Activated T-helper 2 cell treated with anti-CD3 and anti-CD28 coated beads, Interferon-gamma antibody, Interleukin-2, Interleukin-4, amounts not matched to agents 10 μg/mL and 5 μg/mL and 100 μg/mL, durations not matched to agents 14 hours and 24 hours and 36 hours (primary cell): ENCODE measurements at regions of chr5 and their contacts with region 1.

Region 1: GRCh38 chr5:150758531-150759333 is at the start of gene DCTN4:
- DNase-seq: peak; percentile 90
- H3K4me3 Mint-ChIP-seq: no peak within 1 kb of the TSS
- H3K27ac Mint-ChIP-seq: no peak within 1 kb of the TSS
- H3K4me1 Mint-ChIP-seq: peaks cover 36% of the 10 kb centered on the region
- H3K27me3 Mint-ChIP-seq: no peaks in the 10 kb centered on the region
- total RNA-seq, gene DCTN4: 40.9 and 44.7 TPM in 2 replicates

Region 2: GRCh38 chr5:150700594-150701293 is 58.0 kb before region 1 on chr5 and contains the start of gene RBM22:
- intact Hi-C with region 1: loop called (anchors 1 kb)
- DNase-seq: peak; percentile 86
- H3K4me3 Mint-ChIP-seq: no peak within 1 kb of the TSS
- H3K27ac Mint-ChIP-seq: no peak within 1 kb of the TSS
- H3K4me1 Mint-ChIP-seq: peaks cover 6% of the 10 kb centered on the region
- H3K27me3 Mint-ChIP-seq: no peaks in the 10 kb centered on the region
- total RNA-seq, gene RBM22: 65.2 and 71.7 TPM in 2 replicates

Region 3: DNA sequence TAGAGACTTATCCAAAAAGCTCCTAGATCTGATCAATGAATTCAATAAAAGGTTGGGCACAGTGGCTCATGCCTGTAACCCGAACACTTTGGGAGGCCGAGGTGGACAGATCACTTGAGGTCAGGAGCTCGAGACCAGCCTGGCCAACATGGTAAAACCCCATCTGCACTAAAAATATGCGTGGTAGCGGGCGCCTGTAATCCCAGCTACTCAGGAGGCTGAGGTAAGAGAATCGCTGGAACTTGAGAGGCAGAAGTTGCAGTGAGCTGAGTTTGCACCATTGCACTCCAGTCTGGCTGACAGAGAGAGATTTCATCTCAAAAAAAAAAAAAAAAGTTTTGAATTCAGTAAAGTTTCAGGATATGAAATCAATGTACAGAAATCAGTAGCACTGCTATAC is 19.9 kb before region 1 on chr5:
- intact Hi-C with region 1: loop called (anchors 2 kb)
- DNase-seq: no peak
- H3K4me3 Mint-ChIP-seq: no peak overlapping the region
- H3K27ac Mint-ChIP-seq: peak overlapping the region; percentile 54
- H3K4me1 Mint-ChIP-seq: peaks cover 73% of the 10 kb centered on the region
- H3K27me3 Mint-ChIP-seq: no peaks in the 10 kb centered on the region

Region 4: DNA sequence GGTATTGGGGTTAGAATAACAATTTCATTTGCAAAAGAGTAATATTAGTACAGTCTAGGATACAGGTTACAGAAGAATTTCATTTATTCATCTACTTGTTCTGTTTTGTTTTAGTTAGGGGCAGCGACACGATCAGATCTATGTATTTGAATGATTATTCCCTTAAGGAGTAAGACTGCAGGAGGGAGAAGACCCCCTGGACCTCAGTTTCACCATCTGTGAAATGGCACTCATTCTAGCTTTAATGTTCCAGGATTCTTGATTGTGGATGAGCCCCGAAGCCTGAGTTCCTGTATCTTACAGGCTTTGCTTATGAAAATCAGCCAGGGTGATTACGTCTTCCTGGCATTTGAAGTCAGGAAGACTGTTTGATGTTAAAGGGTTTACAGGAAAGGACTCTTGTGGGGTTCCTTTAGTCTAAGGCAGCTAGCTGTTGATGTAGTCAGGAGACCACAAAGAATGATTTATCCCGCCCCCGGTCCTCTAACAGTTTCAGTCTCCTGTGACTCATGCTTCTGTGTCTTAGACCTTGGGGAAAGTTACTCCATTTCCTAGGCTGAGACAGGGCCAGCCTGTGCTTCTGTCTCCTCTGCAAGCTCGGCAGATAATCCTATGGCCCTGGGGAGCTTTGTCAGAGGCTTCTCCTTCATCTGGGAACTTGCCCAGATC is 31.3 kb after region 1 on chr5:
- intact Hi-C with region 1: loop called (anchors 1 kb)
- DNase-seq: peak; percentile 49
- H3K4me3 Mint-ChIP-seq: peak overlapping the region; percentile 49
- H3K27ac Mint-ChIP-seq: peak overlapping the region; percentile 87
- H3K4me1 Mint-ChIP-seq: peaks cover 44% of the 10 kb centered on the region
- H3K27me3 Mint-ChIP-seq: no peaks in the 10 kb centered on the region